ENCODE measurements at regions of chr14 and their contacts with region 1.

Region 1: GRCh38 chr14:63543000-63543825 is at the start of gene PPP2R5E:
- DNase-seq: peak; percentile 96
- H3K4me3 Mint-ChIP-seq: peak within 1 kb of the TSS; percentile 78
- H3K27ac Mint-ChIP-seq: peak within 1 kb of the TSS; percentile 66
- H3K4me1 Mint-ChIP-seq: peaks cover 21% of the 10 kb centered on the region
- H3K27me3 Mint-ChIP-seq: no peaks in the 10 kb centered on the region
- CTCF ChIP-seq: no peak
- total RNA-seq, gene PPP2R5E: 46.2 and 52.5 TPM in 2 replicates

Region 2: DNA sequence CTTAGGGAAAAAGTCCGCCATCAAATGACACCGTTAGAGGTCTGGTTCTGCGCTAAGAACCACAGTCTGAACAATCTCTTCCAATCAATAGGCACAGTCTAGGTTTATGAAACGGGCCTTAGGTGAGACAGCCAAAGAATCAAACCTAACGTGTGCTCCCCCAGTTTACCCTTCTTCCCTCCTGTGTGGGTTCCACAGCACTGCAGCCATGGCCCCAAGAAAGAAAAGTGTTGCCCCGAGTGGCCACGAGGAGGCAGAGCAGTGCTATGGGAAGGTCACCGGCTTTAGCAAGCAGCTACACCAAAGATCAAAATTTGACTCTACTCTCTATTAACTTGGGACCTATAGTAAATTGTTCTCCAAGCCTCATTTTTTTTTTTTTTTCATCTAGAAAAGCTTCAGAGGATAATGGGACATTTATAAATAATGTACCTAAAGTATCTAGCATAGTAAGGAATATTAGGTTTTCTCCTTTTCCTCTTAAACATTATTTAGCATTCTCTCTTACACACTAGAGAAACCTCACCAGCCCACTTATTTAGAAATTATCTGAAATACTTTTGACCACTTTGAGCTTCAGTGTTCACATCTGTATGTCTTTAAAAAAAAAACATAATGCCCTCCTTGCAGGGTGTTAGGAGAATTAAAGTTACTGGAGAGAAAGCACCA is 154.3 kb before region 1 on chr14:
- CTCF ChIA-PET with region 1: interaction called, 18 read pairs
- intact Hi-C with region 1: loop called (anchors 1 kb)
- DNase-seq: peak; percentile 68
- H3K4me3 Mint-ChIP-seq: no peak overlapping the region
- H3K27ac Mint-ChIP-seq: no peak overlapping the region
- H3K4me1 Mint-ChIP-seq: no peaks in the 10 kb centered on the region
- H3K27me3 Mint-ChIP-seq: no peaks in the 10 kb centered on the region
- CTCF ChIP-seq: peak; percentile 45

Region 3: GRCh38 chr14:63437953-63438757 is 105.1 kb before region 1 on chr14:
- CTCF ChIA-PET with region 1: no interaction called
- intact Hi-C with region 1: no loop called
- DNase-seq: peak; percentile 67
- H3K4me3 Mint-ChIP-seq: peak overlapping the region; percentile 16
- H3K27ac Mint-ChIP-seq: peak overlapping the region; percentile 61
- H3K4me1 Mint-ChIP-seq: peaks cover 42% of the 10 kb centered on the region
- H3K27me3 Mint-ChIP-seq: no peaks in the 10 kb centered on the region
- CTCF ChIP-seq: no peak

Region 4: GRCh38 chr14:63457498-63457897 is 85.7 kb before region 1 on chr14:
- CTCF ChIA-PET with region 1: no interaction called
- intact Hi-C with region 1: no loop called
- DNase-seq: no peak
- H3K4me3 Mint-ChIP-seq: no peak overlapping the region
- H3K27ac Mint-ChIP-seq: no peak overlapping the region
- H3K4me1 Mint-ChIP-seq: peaks cover 18% of the 10 kb centered on the region
- H3K27me3 Mint-ChIP-seq: no peaks in the 10 kb centered on the region
- CTCF ChIP-seq: no peak

Region 5: DNA sequence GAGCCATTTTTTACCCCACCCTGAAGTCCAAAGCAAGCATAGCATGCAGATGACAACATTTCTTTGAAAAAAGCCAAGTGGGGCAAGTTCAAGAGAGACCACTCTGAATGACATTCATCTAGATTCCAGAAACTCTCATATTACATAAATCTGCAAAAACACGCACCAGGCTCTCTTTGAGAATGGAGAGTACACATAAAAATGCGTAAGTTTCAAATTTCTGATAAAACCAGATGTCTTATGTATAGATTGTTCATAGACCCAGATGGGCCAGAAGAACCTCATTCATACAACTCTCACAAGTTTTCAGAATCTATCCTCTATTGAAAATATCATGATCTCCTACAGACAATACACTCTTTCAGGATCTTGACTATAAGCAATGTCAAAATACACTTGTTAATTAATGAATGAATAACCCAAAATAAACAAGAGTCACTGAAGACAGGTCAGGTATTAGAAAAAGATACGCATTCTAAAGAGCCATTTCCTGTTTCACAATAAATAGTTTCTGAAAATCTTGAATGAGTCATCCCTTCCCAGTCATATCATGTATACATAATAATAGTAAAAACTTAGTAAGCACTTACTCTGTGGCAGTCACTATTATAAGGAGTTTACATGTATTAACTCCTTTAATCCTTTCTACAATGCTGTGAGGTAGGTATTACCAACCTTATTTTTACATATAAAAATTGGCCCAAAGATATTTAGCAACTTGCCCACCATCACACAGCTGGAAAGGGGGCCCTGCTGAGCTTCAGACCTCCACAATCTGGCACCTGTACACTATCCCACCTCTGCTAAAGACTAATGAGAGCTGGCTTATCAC is 72.0 kb before region 1 on chr14:
- CTCF ChIA-PET with region 1: interaction called, 3 read pairs
- intact Hi-C with region 1: loop called (anchors 5 kb)
- DNase-seq: no peak
- H3K4me3 Mint-ChIP-seq: peak overlapping the region; percentile 53
- H3K27ac Mint-ChIP-seq: no peak overlapping the region
- H3K4me1 Mint-ChIP-seq: peaks cover 16% of the 10 kb centered on the region
- H3K27me3 Mint-ChIP-seq: no peaks in the 10 kb centered on the region
- CTCF ChIP-seq: no peak

Region 6: DNA sequence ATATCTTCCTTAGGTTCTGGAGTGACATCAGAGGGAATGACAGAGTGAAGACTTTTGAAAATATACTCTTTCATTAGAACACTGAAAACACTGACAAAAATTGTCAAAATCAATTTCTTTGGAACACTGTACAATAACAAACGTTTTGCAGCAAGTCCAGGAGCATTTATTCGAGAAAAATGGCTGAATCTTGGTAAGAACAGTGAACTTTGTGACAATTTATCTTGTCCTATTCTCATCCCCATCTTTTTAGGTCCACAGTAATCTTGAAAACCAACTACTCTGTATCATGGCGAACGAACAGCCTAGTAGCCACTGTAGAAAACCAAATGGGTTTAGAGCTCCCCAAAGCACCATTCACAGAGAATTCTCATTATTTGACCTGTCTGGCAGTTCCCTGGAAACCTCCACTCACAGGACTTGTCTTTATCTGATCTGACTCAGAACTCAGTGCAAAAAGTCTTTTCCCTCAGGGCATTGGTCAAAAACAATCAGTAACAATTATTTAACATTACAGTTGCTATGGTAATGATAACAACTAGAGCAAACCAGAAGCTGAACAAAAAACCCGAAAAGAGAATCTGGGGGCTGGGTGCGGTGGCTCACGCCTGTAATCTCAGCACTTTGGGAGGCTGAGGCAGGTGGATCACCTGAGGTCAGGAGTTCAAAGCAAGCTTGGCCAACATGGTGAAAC is 20.3 kb after region 1 on chr14:
- CTCF ChIA-PET with region 1: no interaction called
- intact Hi-C with region 1: loop called (anchors 2 kb)
- DNase-seq: peak; percentile 46
- H3K4me3 Mint-ChIP-seq: peak overlapping the region; percentile 9
- H3K27ac Mint-ChIP-seq: peak overlapping the region; percentile 69
- H3K4me1 Mint-ChIP-seq: peaks cover 18% of the 10 kb centered on the region
- H3K27me3 Mint-ChIP-seq: no peaks in the 10 kb centered on the region
- CTCF ChIP-seq: no peak

Region 7: DNA sequence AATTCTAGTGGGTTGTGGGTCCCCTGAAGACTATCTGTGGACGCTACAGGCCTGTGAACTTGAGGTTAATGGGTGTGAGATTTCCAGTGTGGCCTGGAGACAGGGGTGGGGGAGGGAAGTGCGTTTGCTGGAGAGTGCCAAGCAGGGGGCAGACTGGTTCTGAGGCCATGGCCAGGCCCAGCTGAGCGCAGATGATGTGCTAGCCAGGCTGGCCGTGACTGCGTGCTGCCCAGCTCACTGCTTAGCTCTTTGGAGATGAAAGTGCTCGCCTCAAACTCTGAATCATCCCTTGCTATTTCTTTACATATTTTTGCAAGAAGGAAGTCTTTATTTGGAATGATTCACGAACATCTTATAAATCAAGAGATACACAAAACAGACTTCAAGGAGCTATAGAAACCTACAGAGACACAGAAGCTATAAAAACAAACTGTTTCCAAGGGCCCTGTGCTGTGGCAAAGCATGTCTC is 1085.8 kb after region 1 on chr14:
- CTCF ChIA-PET with region 1: no interaction called
- intact Hi-C with region 1: no loop called
- DNase-seq: no peak
- H3K4me3 Mint-ChIP-seq: no peak overlapping the region
- H3K27ac Mint-ChIP-seq: no peak overlapping the region
- H3K4me1 Mint-ChIP-seq: no peaks in the 10 kb centered on the region
- H3K27me3 Mint-ChIP-seq: no peaks in the 10 kb centered on the region
- CTCF ChIP-seq: no peak

Measured in Calu3 (cell line).